Thyroid gland (tissue), 4 donors: ENCODE measurements at regions of chr22 and their contacts with region 1.

Region 1: GRCh38 chr22:45889305-45890093 is 87.5 kb downstream of the WNT7B start:
- DNase-seq: peak; percentile 29 to 31
- H3K4me3 ChIP-seq: no peak overlapping the region
- H3K27ac ChIP-seq: no peak overlapping the region
- H3K4me1 ChIP-seq: peaks cover 4 to 14% of the 10 kb centered on the region in 2 donors
- H3K27me3 ChIP-seq: no peaks in the 10 kb centered on the region
- CTCF ChIP-seq: no peak
- POLR2A ChIP-seq: no peak

Region 2: GRCh38 chr22:45968751-45969413 is 79.4 kb after region 1 on chr22:
- intact Hi-C with region 1: loop called (anchors 10 kb)
- DNase-seq: no peak
- H3K4me3 ChIP-seq: no peak overlapping the region
- H3K27ac ChIP-seq: no peak overlapping the region
- H3K4me1 ChIP-seq: peaks cover 0 to 21% of the 10 kb centered on the region in 2 donors
- H3K27me3 ChIP-seq: peaks cover 10% of the 10 kb centered on the region
- CTCF ChIP-seq: no peak
- POLR2A ChIP-seq: no peak